PC-3 (cell line): ENCODE measurements at regions of chr11 and their contacts with region 1.

Region 1: DNA sequence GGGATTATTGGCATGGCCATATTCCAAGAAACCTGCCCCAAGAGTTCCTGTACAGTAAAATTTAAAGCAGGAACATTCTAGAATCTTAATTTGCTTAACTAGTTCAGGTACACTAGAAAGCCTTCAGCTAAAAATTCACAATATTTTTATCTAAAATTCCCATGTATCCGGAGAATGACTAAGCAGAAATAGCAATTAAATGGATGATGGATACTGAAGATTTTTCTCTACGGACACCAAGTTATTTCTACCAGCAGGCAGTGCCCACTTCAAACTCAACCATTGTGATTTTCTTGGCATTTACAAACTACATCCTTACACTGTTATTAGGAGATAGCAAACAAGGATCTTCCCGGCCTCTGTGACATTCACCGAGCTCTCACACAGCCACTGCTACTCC is 2.9 kb downstream of the PATE3 start:
- DNase-seq: no peak
- ATAC-seq: no peak
- H3K4me3 ChIP-seq: no peak overlapping the region
- H3K27ac ChIP-seq: no peak overlapping the region
- H3K4me1 ChIP-seq: no peaks in the 10 kb centered on the region
- H3K27me3 ChIP-seq: no peaks in the 10 kb centered on the region
- CTCF ChIP-seq: no peak

Region 2: GRCh38 chr11:125833016-125833415 is 42.2 kb after region 1 on chr11 and contains the start of gene PATE4:
- CTCF ChIA-PET with region 1: no interaction called
- POLR2A ChIA-PET with region 1: no interaction called
- intact Hi-C with region 1: loop called (anchors 5 kb)
- DNase-seq: no peak
- ATAC-seq: no peak
- H3K4me3 ChIP-seq: no peak within 1 kb of the TSS
- H3K27ac ChIP-seq: no peak within 1 kb of the TSS
- H3K4me1 ChIP-seq: no peaks in the 10 kb centered on the region
- H3K27me3 ChIP-seq: no peaks in the 10 kb centered on the region
- CTCF ChIP-seq: no peak
- total RNA-seq, gene PATE4: not detected in 2 replicates